ENCODE measurements at regions of chr6 and their contacts with region 1.

Region 1: GRCh38 chr6:90274451-90275030 is 22.1 kb downstream of the BACH2 start:
- DNase-seq: peak in 2 of 3 donors; percentile 59 to 70
- H3K4me3 ChIP-seq: no peak overlapping the region
- H3K27ac ChIP-seq: no peak overlapping the region
- H3K4me1 ChIP-seq: peaks cover 0 to 17% (median 4%) of the 10 kb centered on the region in 4 experiments
- H3K27me3 ChIP-seq: no peaks in the 10 kb centered on the region

Region 2: GRCh38 chr6:90285611-90286381 is 11.3 kb after region 1 on chr6:
- CTCF ChIA-PET with region 1: interaction called, 18 read pairs
- POLR2A ChIA-PET with region 1: interaction called, 4 read pairs
- DNase-seq: peak; percentile 70 to 95 (median 91)
- H3K4me3 ChIP-seq: peak overlapping the region in 6 of 7 experiments; percentile 48 to 79 (median 60)
- H3K27ac ChIP-seq: peak overlapping the region; percentile 47 to 48
- H3K4me1 ChIP-seq: peaks cover 20 to 38% (median 29%) of the 10 kb centered on the region in 4 experiments
- H3K27me3 ChIP-seq: no peaks in the 10 kb centered on the region